Stomach (tissue), 19 donors: ENCODE measurements at regions of chr12 and their contacts with region 1.

Region 1: DNA sequence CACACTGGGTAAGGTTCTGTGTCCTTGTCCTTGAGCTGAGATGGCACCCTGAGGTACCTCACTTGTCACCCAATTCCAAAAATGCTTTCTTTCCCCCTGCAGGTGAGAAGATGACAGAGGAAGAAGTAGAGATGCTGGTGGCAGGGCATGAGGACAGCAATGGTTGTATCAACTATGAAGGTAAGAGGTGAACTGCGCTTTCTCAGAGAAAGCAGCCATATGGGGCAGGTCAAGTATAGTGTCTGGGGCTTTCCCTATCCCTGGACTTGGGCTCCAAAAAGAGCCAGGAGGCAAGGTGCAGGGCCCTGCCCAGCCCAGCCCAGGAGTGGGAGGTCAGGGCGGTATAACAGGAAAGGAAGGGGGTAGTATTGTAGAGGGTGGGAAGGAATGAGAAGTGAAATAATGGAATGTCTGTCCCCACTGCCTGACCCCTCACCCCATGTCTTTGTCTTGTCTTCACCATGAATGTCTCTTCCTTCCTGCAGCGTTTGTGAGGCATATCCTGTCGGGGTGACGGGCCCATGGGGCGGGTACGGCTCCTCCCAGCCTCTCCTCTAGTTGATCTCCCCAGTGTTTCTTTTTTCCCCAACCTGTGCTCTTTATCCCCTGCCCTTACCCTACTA is 2.1 kb downstream of the MYL6 start:
- DNase-seq: peak in 1 of 2 donors; percentile 63
- H3K4me3 ChIP-seq: peak overlapping the region; percentile 71 to 85 (median 74)
- H3K27ac ChIP-seq: peak overlapping the region; percentile 95 to 99 (median 97)
- H3K4me1 ChIP-seq: peaks cover 31 to 69% (median 49%) of the 10 kb centered on the region in 4 donors
- H3K27me3 ChIP-seq: no peaks in the 10 kb centered on the region
- CTCF ChIP-seq: no peak
- EP300 ChIP-seq: no peak
- POLR2A ChIP-seq: peak in 1 of 4 donors; percentile 8

Region 2: DNA sequence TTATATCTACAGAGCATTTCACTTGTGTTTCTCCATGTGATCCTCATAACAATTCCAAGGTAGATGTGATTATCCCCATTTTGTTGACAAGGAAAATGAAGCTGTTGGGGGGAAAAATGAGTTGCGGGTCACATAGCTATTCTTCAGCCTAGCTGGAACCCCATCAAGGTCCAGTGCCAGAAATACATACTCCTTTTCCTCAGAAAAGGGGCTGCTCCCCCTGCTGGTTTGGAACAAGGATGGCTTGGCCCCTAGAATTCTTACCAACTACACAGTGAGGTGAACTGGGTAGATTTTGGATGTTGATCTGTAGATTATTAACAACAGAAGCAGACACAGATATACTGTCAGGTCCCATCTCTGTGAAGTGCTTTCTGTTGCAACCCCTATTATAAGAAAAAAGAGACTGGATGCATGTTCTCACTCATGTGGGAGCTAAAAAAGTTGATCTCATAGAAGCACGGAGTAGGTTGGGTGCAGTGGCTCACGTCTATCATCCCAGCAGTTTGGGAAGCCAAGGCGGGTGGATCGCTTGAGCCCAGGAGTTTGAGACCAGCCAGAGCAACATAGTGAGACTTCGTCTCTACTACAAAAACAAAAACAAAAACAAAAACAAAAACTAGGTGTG is 130.5 kb before region 1 on chr12:
- intact Hi-C with region 1: no loop called
- DNase-seq: peak; percentile 37 to 87
- H3K4me3 ChIP-seq: no peak overlapping the region
- H3K27ac ChIP-seq: no peak overlapping the region
- H3K4me1 ChIP-seq: peaks cover 0 to 11% (median 5%) of the 10 kb centered on the region in 4 donors
- H3K27me3 ChIP-seq: no peaks in the 10 kb centered on the region
- CTCF ChIP-seq: peak in 5 of 7 experiments; percentile 43 to 75 (median 57)
- EP300 ChIP-seq: no peak
- POLR2A ChIP-seq: no peak

Region 3: GRCh38 chr12:56071648-56072047 is 88.6 kb before region 1 on chr12:
- intact Hi-C with region 1: no loop called
- DNase-seq: no peak
- H3K4me3 ChIP-seq: no peak overlapping the region
- H3K27ac ChIP-seq: no peak overlapping the region
- H3K4me1 ChIP-seq: no peaks in the 10 kb centered on the region
- H3K27me3 ChIP-seq: no peaks in the 10 kb centered on the region
- CTCF ChIP-seq: no peak
- EP300 ChIP-seq: no peak
- POLR2A ChIP-seq: no peak

Region 4: GRCh38 chr12:56120158-56120844 is 40.0 kb before region 1 on chr12:
- intact Hi-C with region 1: loop called (anchors 5 kb)
- DNase-seq: no peak
- H3K4me3 ChIP-seq: no peak overlapping the region
- H3K27ac ChIP-seq: peak overlapping the region in 4 of 5 donors; percentile 95 to 97 (median 96)
- H3K4me1 ChIP-seq: peaks cover 18 to 63% (median 38%) of the 10 kb centered on the region in 4 donors
- H3K27me3 ChIP-seq: no peaks in the 10 kb centered on the region
- CTCF ChIP-seq: no peak
- EP300 ChIP-seq: no peak
- POLR2A ChIP-seq: no peak

Region 5: GRCh38 chr12:56321027-56321426 is 160.8 kb after region 1 on chr12:
- intact Hi-C with region 1: no loop called
- DNase-seq: no peak
- H3K4me3 ChIP-seq: no peak overlapping the region
- H3K27ac ChIP-seq: no peak overlapping the region
- H3K4me1 ChIP-seq: peaks cover 6 to 10% (median 7%) of the 10 kb centered on the region in 4 donors
- H3K27me3 ChIP-seq: no peaks in the 10 kb centered on the region
- CTCF ChIP-seq: no peak
- EP300 ChIP-seq: no peak
- POLR2A ChIP-seq: no peak